Adrenal gland (tissue), 19 donors: ENCODE measurements at regions of chr2 and their contacts with region 1.

Region 1: GRCh38 chr2:68832233-68832869 is 38.8 kb downstream of the BMP10 start:
- DNase-seq: peak; percentile 57 to 88 (median 82)
- H3K4me3 ChIP-seq: no peak overlapping the region
- H3K27ac ChIP-seq: peak overlapping the region; percentile 59 to 95 (median 83)
- H3K4me1 ChIP-seq: peaks cover 37 to 50% of the 10 kb centered on the region in 2 donors
- H3K27me3 ChIP-seq: no peaks in the 10 kb centered on the region
- CTCF ChIP-seq: no peak
- POLR2A ChIP-seq: peak in 1 of 2 donors; percentile 30

Region 2: DNA sequence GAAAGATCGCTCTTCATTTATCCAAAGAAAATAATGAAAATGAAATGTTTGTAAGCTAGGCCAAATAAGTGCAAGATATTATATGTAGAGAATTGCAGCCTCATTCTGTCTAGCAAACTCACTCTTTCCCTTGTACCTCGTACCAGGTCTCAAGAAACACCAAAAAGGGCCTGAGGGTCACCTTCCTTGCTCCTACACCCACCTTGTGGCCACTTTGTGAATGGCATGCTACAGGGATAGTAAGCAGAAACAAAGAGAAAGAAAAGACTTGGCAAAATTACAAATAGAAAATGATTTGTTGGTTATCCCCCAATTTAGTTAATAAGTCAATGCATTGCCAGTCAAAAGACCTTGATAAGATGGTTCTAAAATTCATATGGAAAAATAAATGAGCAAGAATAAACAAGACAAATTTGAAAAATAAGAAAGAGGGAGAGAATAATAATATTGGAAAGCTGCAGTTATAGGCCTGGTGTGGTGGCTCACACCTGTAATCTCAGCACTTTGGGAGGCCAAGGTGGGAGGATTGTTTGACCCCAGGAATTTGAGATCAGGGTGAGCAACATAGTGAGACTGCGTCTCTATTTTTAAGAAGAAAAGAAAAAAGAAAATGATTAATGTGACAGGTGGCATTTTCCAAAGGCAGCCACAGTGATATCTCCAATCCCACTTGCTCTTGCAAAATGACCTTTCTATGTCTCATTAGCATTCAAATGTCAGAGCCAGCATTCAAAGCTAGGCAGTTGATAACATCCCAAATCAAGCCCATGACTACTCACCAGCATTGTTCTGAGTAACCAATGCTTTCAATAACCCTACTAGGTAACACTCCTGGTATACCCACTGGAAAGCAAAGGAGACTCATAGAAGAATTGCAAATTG is 77.7 kb after region 1 on chr2:
- intact Hi-C with region 1: loop called in 1 of 2 experiments (anchors 10 kb)
- DNase-seq: peak; percentile 68 to 92 (median 82)
- H3K4me3 ChIP-seq: no peak overlapping the region
- H3K27ac ChIP-seq: peak overlapping the region in 1 of 5 donors; percentile 42
- H3K4me1 ChIP-seq: peaks cover 7 to 26% of the 10 kb centered on the region in 2 donors
- H3K27me3 ChIP-seq: no peaks in the 10 kb centered on the region
- CTCF ChIP-seq: peak; percentile 82 to 96 (median 92)
- POLR2A ChIP-seq: no peak